ENCODE measurements at regions of chr20 and their contacts with region 1.

Region 1: GRCh38 chr20:45362804-45363610 is at the start of gene SYS1:
- DNase-seq: peak; percentile 97 to 100 (median 98)
- ATAC-seq: peak; percentile 84 to 86 (median 84)
- H3K4me3 ChIP-seq: peak within 1 kb of the TSS; percentile 83 to 92
- H3K4me3 Mint-ChIP-seq: peak within 1 kb of the TSS; percentile 86 to 99 (median 98)
- H3K27ac ChIP-seq: peak within 1 kb of the TSS; percentile 96
- H3K27ac Mint-ChIP-seq: peak within 1 kb of the TSS; percentile 99 to 100
- H3K4me1 ChIP-seq: peaks cover 28 to 43% of the 10 kb centered on the region in 2 experiments
- H3K4me1 Mint-ChIP-seq: peaks cover 42 to 50% (median 47%) of the 10 kb centered on the region in 3 donors
- H3K27me3 ChIP-seq: no peaks in the 10 kb centered on the region
- H3K27me3 Mint-ChIP-seq: no peaks in the 10 kb centered on the region
- total RNA-seq, gene SYS1: 53.1 to 86.9 (median 58.2) TPM

Region 2: GRCh38 chr20:44979090-44979621 is 383.9 kb before region 1 on chr20:
- CTCF ChIA-PET with region 1: no interaction called
- POLR2A ChIA-PET with region 1: interaction called in 1 of 2 experiments, 12 read pairs
- DNase-seq: peak in 34 of 35 experiments; percentile 12 to 92 (median 62)
- ATAC-seq: peak; percentile 83 to 88 (median 86)
- H3K4me3 ChIP-seq: peak overlapping the region; percentile 39 to 44
- H3K4me3 Mint-ChIP-seq: peak overlapping the region; percentile 71 to 84 (median 76)
- H3K27ac ChIP-seq: peak overlapping the region; percentile 91
- H3K27ac Mint-ChIP-seq: peak overlapping the region; percentile 93 to 98
- H3K4me1 ChIP-seq: peaks cover 47 to 67% of the 10 kb centered on the region in 2 experiments
- H3K4me1 Mint-ChIP-seq: peaks cover 90 to 95% (median 92%) of the 10 kb centered on the region in 3 donors
- H3K27me3 ChIP-seq: no peaks in the 10 kb centered on the region
- H3K27me3 Mint-ChIP-seq: no peaks in the 10 kb centered on the region

Region 3: DNA sequence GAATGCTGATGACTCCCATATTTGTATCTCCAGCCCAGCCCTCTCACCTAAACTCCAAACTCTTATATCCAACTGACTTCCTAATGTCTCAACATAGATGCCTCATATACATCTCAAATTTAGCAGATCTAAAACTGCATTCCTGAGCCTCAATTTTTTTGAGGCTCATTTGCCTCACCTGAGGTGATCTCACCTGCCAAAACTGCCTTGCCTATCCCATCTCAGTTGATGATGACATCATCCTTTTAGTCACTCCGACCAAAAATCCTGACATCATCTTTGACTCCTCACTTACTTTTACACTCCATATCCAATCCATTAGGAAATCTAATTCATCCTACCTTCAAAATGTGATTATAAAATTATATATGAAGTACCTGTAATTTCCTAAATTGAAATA is 83.0 kb before region 1 on chr20:
- CTCF ChIA-PET with region 1: no interaction called
- POLR2A ChIA-PET with region 1: no interaction called
- DNase-seq: no peak
- ATAC-seq: no peak
- H3K4me3 ChIP-seq: no peak overlapping the region
- H3K4me3 Mint-ChIP-seq: no peak overlapping the region
- H3K27ac ChIP-seq: no peak overlapping the region
- H3K27ac Mint-ChIP-seq: no peak overlapping the region
- H3K4me1 ChIP-seq: no peaks in the 10 kb centered on the region
- H3K4me1 Mint-ChIP-seq: no peaks in the 10 kb centered on the region
- H3K27me3 ChIP-seq: peaks cover 0 to 19% of the 10 kb centered on the region in 2 experiments
- H3K27me3 Mint-ChIP-seq: peaks cover 42 to 49% of the 10 kb centered on the region in 2 donors

Region 4: GRCh38 chr20:45373353-45374100 is 10.5 kb after region 1 on chr20:
- CTCF ChIA-PET with region 1: interaction called, 4 to 43 read pairs
- POLR2A ChIA-PET with region 1: interaction called, 3 to 19 read pairs
- DNase-seq: peak; percentile 77 to 96 (median 87)
- ATAC-seq: peak; percentile 85 to 93 (median 91)
- H3K4me3 ChIP-seq: peak overlapping the region; percentile 58 to 62
- H3K4me3 Mint-ChIP-seq: peak overlapping the region; percentile 71 to 85 (median 80)
- H3K27ac ChIP-seq: peak overlapping the region; percentile 83
- H3K27ac Mint-ChIP-seq: peak overlapping the region; percentile 88 to 90
- H3K4me1 ChIP-seq: peaks cover 15 to 26% of the 10 kb centered on the region in 2 experiments
- H3K4me1 Mint-ChIP-seq: peaks cover 28 to 44% (median 39%) of the 10 kb centered on the region in 3 donors
- H3K27me3 ChIP-seq: no peaks in the 10 kb centered on the region
- H3K27me3 Mint-ChIP-seq: no peaks in the 10 kb centered on the region

Region 5: GRCh38 chr20:45426320-45427020 is 63.5 kb after region 1 on chr20:
- CTCF ChIA-PET with region 1: no interaction called
- POLR2A ChIA-PET with region 1: no interaction called
- DNase-seq: no peak
- ATAC-seq: peak in 1 of 4 experiments; percentile 9
- H3K4me3 ChIP-seq: no peak overlapping the region
- H3K4me3 Mint-ChIP-seq: no peak overlapping the region
- H3K27ac ChIP-seq: no peak overlapping the region
- H3K27ac Mint-ChIP-seq: no peak overlapping the region
- H3K4me1 ChIP-seq: no peaks in the 10 kb centered on the region
- H3K4me1 Mint-ChIP-seq: no peaks in the 10 kb centered on the region
- H3K27me3 ChIP-seq: no peaks in the 10 kb centered on the region
- H3K27me3 Mint-ChIP-seq: no peaks in the 10 kb centered on the region

Region 6: GRCh38 chr20:45436732-45437391 is 73.9 kb after region 1 on chr20:
- CTCF ChIA-PET with region 1: interaction called, 3 to 95 read pairs
- POLR2A ChIA-PET with region 1: interaction called, 4 read pairs
- DNase-seq: peak; percentile 63 to 93 (median 81)
- ATAC-seq: peak; percentile 98 to 99 (median 99)
- H3K4me3 ChIP-seq: peak overlapping the region; percentile 50 to 83
- H3K4me3 Mint-ChIP-seq: peak overlapping the region; percentile 80 to 82 (median 81)
- H3K27ac ChIP-seq: no peak overlapping the region
- H3K27ac Mint-ChIP-seq: peak overlapping the region; percentile 27 to 74
- H3K4me1 ChIP-seq: peaks cover 4 to 18% of the 10 kb centered on the region in 2 experiments
- H3K4me1 Mint-ChIP-seq: peaks cover 7 to 23% (median 11%) of the 10 kb centered on the region in 3 donors
- H3K27me3 ChIP-seq: no peaks in the 10 kb centered on the region
- H3K27me3 Mint-ChIP-seq: no peaks in the 10 kb centered on the region

Region 7: GRCh38 chr20:45771182-45771759 is 408.3 kb after region 1 on chr20:
- CTCF ChIA-PET with region 1: interaction called, 3 to 12 read pairs
- POLR2A ChIA-PET with region 1: interaction called in 1 of 2 experiments, 3 read pairs
- DNase-seq: peak; percentile 50 to 89 (median 74)
- ATAC-seq: peak; percentile 70 to 82 (median 74)
- H3K4me3 ChIP-seq: no peak overlapping the region
- H3K4me3 Mint-ChIP-seq: no peak overlapping the region
- H3K27ac ChIP-seq: no peak overlapping the region
- H3K27ac Mint-ChIP-seq: peak overlapping the region in 1 of 2 donors; percentile 52
- H3K4me1 ChIP-seq: peaks cover 0 to 3% of the 10 kb centered on the region in 2 experiments
- H3K4me1 Mint-ChIP-seq: peaks cover 0 to 5% (median 5%) of the 10 kb centered on the region in 3 donors
- H3K27me3 ChIP-seq: peaks cover 0 to 19% of the 10 kb centered on the region in 2 experiments
- H3K27me3 Mint-ChIP-seq: peaks cover 9 to 26% of the 10 kb centered on the region in 2 donors